ENCODE measurements at regions of chr22 and their contacts with region 1.

Region 1: GRCh38 chr22:17171313-17172171 is 12.5 kb upstream of the HDHD5 start:
- DNase-seq: peak; percentile 86
- ATAC-seq: peak; percentile 91
- H3K4me3 Mint-ChIP-seq: peak overlapping the region; percentile 77
- H3K27ac Mint-ChIP-seq: no peak overlapping the region
- H3K4me1 Mint-ChIP-seq: peaks cover 8% of the 10 kb centered on the region
- H3K27me3 Mint-ChIP-seq: peaks cover 2% of the 10 kb centered on the region
- CTCF ChIP-seq: peak; percentile 64

Region 2: DNA sequence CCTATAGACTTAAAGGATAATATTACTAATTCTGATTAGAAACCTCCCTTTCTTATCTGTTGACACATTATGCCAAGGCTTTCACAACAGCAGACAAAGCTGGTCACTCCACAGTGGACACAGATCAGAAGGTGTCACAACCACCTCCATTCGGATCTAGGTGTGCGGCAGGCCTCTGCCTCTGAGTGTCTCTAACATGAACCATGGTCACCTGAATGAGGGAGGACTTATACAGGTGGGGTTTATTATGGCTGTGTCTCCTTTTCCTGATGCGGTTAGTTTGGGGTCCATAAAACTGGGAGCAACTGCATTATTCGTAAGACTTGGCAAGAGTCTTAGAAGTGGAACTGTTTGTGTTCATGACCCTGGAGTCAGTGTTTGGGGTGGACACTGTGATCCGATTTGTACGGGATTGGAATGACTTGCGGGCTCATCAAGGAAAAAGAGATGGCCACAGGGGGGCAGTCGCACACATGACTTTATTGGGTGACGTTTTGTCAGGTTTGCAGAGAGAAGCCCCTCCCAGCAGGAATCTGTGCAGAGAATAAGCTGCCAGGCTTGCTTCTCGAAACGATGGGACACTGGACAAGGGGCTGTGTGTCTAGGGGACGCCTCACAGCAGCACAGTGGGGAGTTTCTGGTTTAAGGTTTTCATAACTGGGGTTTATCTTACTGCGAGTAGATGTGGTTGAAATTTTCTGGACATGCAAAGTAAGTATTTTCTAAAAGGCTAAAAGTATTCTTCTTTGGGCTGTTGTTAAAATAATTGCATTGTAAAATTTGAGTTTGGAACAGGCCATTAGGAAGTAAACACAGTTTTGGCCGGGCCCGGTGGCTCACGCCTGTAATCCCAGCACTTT is 254.2 kb before region 1 on chr22:
- CTCF ChIA-PET with region 1: interaction called, 10 read pairs
- POLR2A ChIA-PET with region 1: no interaction called
- intact Hi-C with region 1: loop called (anchors 1 kb)
- DNase-seq: peak; percentile 49
- ATAC-seq: peak; percentile 42
- H3K4me3 Mint-ChIP-seq: no peak overlapping the region
- H3K27ac Mint-ChIP-seq: no peak overlapping the region
- H3K4me1 Mint-ChIP-seq: peaks cover 28% of the 10 kb centered on the region
- H3K27me3 Mint-ChIP-seq: peaks cover 17% of the 10 kb centered on the region
- CTCF ChIP-seq: no peak

Region 3: DNA sequence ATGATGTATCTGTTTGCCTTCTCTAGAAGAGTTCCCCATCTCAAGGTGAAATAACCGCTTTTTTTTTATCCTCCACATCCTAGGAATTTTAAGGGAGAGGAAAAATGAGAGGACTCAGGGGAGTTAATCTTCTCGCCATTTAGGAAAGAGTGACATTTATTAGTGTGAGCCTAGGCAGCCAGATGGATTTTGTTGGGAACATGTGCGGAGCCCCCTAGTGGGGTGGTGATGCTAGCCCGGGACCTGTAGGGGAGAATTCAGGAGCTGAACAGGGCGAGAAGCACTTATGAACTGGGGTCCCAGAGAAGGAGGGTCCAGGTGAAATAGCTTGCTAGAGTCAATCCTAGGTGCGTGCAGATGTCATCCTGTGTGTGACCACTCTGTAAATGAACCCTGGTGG is 76.0 kb before region 1 on chr22:
- CTCF ChIA-PET with region 1: no interaction called
- POLR2A ChIA-PET with region 1: no interaction called
- intact Hi-C with region 1: no loop called
- DNase-seq: no peak
- ATAC-seq: no peak
- H3K4me3 Mint-ChIP-seq: no peak overlapping the region
- H3K27ac Mint-ChIP-seq: no peak overlapping the region
- H3K4me1 Mint-ChIP-seq: peaks cover 38% of the 10 kb centered on the region
- H3K27me3 Mint-ChIP-seq: no peaks in the 10 kb centered on the region
- CTCF ChIP-seq: no peak

Region 4: DNA sequence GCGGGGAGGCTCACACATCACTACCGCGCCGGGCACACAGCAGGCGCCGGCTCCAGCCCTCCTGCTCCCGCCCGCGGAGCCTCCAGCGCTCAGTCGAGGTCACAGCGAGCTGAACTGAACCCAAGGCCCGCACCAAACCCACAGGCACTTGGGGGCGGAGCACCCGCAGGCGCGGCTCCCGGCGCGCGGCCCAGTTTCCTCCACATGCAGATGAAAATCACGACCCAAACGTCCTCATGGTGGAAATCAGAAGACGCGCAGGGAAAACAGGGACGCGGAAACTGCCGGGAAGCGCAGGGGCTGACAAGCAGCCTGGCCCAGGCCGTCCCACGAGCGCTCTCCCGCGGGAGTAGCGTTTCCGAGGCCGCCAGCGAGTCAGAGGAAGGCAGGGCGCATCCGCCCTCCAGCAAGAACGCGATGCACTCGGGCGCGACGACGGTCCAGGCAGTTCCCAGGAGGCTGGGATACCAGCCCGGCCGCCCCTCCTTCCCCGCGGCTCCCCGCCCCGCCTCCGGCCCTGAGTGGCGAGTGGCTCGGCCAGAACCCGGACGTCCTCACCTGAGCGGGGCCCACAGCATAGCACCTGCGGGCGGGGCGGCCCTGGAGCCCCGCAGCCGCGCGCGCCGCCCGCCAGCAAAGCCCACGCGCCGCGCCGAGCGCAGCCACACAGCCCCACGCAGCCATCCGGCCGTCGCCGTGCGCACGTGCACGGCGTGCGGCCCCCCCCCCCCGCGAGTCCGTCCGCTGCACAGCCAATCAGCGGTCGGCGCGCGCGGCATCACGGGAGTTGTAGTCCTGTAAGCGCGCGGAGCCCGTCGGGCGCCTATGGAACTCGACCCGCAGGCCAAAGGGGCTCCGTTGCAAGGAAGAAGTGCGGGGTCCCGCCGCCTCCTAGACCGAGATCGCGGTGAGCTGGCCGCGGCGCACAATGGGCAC is 12.7 kb before region 1 on chr22 and contains the start of gene HDHD5:
- CTCF ChIA-PET with region 1: interaction called, 21 read pairs
- POLR2A ChIA-PET with region 1: interaction called, 18 read pairs
- intact Hi-C with region 1: loop called (anchors 1 kb)
- DNase-seq: peak; percentile 82
- ATAC-seq: peak; percentile 91
- H3K4me3 Mint-ChIP-seq: peak within 1 kb of the TSS; percentile 83
- H3K27ac Mint-ChIP-seq: peak within 1 kb of the TSS; percentile 59
- H3K4me1 Mint-ChIP-seq: peaks cover 26% of the 10 kb centered on the region
- H3K27me3 Mint-ChIP-seq: no peaks in the 10 kb centered on the region
- CTCF ChIP-seq: no peak
- total RNA-seq, gene HDHD5: 23.9 and 25.2 TPM in 2 replicates

Region 5: GRCh38 chr22:17258015-17258787 is 86.7 kb after region 1 on chr22:
- CTCF ChIA-PET with region 1: interaction called, 6 read pairs
- POLR2A ChIA-PET with region 1: interaction called, 3 read pairs
- intact Hi-C with region 1: loop called (anchors 5 kb)
- DNase-seq: peak; percentile 60
- ATAC-seq: peak; percentile 92
- H3K4me3 Mint-ChIP-seq: peak overlapping the region; percentile 65
- H3K27ac Mint-ChIP-seq: peak overlapping the region; percentile 97
- H3K4me1 Mint-ChIP-seq: peaks cover 30% of the 10 kb centered on the region
- H3K27me3 Mint-ChIP-seq: no peaks in the 10 kb centered on the region
- CTCF ChIP-seq: no peak

Region 6: DNA sequence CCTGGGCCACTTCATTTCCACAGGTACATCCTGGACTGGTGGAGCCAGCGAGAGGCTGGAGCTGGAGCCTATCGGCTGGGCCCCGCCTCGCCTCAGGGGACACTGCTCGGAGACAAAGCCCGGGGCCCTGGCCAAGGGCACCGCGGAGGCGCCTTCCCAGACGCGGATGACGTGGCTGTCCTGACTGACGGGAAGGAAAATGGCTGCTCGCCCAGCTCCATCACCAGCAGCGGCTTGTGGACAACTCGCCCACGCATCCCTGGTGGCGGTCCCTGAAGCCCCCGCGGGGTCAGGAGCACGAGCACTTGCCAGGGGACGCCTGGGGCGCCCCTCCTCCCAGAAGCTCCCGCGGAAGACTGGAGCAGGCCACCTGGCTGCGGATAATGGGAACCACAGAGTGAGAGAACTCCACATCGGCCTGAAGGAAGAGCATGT is 247.4 kb after region 1 on chr22:
- CTCF ChIA-PET with region 1: no interaction called
- POLR2A ChIA-PET with region 1: no interaction called
- intact Hi-C with region 1: no loop called
- DNase-seq: no peak
- ATAC-seq: no peak
- H3K4me3 Mint-ChIP-seq: no peak overlapping the region
- H3K27ac Mint-ChIP-seq: no peak overlapping the region
- H3K4me1 Mint-ChIP-seq: no peaks in the 10 kb centered on the region
- H3K27me3 Mint-ChIP-seq: no peaks in the 10 kb centered on the region
- CTCF ChIP-seq: no peak

Region 7: DNA sequence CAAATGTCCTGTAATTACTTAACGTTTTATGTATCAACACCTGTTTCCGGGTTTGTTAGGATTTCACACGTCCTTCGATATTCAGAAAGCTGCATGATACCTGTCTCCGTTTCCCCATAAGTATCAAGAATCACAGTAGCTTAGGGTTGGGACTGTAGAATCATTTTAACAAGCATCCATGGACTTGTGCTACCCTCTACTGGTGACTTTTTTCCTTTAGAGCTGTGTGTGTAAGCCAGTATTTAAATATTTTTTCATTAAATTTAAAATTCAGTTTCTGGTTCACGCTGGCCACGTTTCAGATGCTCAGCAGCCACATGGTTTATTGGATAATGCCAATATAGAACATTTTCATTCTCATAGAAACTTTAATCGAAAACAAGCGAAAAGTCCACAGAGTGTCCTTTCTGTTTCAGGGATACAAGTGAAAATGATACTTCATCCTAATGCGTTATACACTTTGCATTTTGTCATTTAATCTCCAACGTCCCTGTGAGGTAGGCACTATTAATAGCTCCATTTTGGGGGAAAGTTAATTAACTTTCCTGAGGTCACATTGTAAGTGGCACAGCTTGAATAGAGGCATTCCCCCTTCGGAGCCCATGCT is 330.2 kb after region 1 on chr22:
- CTCF ChIA-PET with region 1: interaction called, 152 read pairs
- POLR2A ChIA-PET with region 1: interaction called, 20 read pairs
- intact Hi-C with region 1: loop called (anchors 1 kb)
- DNase-seq: no peak
- ATAC-seq: peak; percentile 88
- H3K4me3 Mint-ChIP-seq: no peak overlapping the region
- H3K27ac Mint-ChIP-seq: no peak overlapping the region
- H3K4me1 Mint-ChIP-seq: peaks cover 6% of the 10 kb centered on the region
- H3K27me3 Mint-ChIP-seq: no peaks in the 10 kb centered on the region
- CTCF ChIP-seq: peak; percentile 43

Measured in activated B cell treated with CpG ODN at 0.5 μM for 24 hours (primary cell).